MCF 10A (cell line): ENCODE measurements at regions of chr2 and their contacts with region 1.

Region 1: DNA sequence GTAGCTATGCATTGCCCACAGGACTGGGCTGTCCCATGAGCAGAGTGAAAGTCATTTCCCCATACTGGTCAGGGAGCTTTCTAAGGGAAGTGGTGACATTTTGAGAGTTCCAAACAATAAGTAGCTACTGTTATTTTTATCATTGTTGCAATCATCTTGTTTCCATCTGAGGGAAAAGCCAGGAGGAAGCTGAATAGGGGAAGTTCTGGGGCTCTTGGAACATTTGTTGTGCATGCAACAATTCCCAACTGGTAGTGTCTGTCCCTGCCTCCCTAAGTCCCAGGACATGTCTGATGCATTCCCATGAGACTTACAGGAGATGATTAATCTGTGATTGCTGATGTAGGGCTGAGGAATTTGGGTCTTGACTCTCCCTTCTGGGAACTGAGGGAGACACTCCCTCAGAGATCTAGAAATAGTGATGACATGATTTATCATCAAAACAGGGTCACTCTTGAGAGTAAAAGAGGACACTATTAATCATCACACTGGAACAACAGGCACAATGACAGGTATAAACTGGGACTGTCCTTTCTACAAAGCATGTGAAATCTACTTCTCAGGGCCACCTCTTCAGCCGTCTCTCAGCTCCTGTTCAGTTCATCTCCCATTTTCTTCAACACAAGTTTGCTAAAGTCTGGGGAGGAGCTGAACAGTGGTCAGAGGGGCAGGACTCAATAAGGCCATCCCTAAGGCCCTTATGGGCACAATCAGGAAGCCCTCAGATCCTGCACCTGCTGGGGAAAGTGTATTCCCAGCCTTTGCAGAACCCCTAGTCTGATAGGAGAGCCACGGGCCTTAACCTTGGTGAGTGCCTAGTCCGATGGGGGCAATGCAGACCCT is 28.0 kb upstream of the MARCO start:
- DNase-seq: peak; percentile 61
- H3K4me3 Mint-ChIP-seq: no peak overlapping the region
- H3K27ac Mint-ChIP-seq: peak overlapping the region; percentile 83
- H3K4me1 Mint-ChIP-seq: peaks cover 9% of the 10 kb centered on the region
- H3K27me3 Mint-ChIP-seq: no peaks in the 10 kb centered on the region
- CTCF ChIP-seq: no peak

Region 2: GRCh38 chr2:118312969-118313756 is 600.9 kb before region 1 on chr2:
- CTCF ChIA-PET with region 1: no interaction called
- POLR2A ChIA-PET with region 1: no interaction called
- intact Hi-C with region 1: no loop called
- DNase-seq: no peak
- H3K4me3 Mint-ChIP-seq: no peak overlapping the region
- H3K27ac Mint-ChIP-seq: no peak overlapping the region
- H3K4me1 Mint-ChIP-seq: no peaks in the 10 kb centered on the region
- H3K27me3 Mint-ChIP-seq: no peaks in the 10 kb centered on the region
- CTCF ChIP-seq: no peak

Region 3: DNA sequence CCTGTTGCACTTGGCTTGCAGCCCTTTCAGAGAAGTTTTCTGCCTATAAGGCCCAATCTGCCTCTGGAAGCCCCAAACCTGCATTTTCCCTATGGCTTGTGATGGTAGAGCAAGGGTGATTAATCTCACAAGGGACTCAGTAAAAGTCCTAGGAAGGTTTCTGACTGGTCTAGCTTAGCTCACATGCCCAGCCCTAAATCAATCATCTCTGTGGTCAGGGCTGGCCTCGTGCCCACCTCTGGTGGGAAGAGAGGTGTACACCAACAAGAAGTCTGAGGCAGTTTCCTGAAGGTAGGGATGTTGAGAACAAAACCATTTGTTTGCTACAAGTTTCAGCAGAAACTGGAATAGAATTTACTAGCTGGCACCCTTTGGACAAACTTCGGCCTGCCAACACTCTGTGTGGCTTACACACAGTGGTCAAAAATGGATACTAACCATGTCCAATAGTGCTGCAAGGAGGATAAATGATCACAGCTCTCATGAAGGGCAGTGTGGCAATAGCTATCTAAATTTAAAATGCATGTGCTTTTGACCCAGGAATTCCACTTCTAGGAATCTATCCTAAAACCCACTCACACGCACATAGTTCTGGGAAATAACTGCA is 163.0 kb before region 1 on chr2:
- CTCF ChIA-PET with region 1: no interaction called
- POLR2A ChIA-PET with region 1: no interaction called
- intact Hi-C with region 1: no loop called
- DNase-seq: peak; percentile 78
- H3K4me3 Mint-ChIP-seq: no peak overlapping the region
- H3K27ac Mint-ChIP-seq: no peak overlapping the region
- H3K4me1 Mint-ChIP-seq: peaks cover 8% of the 10 kb centered on the region
- H3K27me3 Mint-ChIP-seq: no peaks in the 10 kb centered on the region
- CTCF ChIP-seq: no peak

Region 4: DNA sequence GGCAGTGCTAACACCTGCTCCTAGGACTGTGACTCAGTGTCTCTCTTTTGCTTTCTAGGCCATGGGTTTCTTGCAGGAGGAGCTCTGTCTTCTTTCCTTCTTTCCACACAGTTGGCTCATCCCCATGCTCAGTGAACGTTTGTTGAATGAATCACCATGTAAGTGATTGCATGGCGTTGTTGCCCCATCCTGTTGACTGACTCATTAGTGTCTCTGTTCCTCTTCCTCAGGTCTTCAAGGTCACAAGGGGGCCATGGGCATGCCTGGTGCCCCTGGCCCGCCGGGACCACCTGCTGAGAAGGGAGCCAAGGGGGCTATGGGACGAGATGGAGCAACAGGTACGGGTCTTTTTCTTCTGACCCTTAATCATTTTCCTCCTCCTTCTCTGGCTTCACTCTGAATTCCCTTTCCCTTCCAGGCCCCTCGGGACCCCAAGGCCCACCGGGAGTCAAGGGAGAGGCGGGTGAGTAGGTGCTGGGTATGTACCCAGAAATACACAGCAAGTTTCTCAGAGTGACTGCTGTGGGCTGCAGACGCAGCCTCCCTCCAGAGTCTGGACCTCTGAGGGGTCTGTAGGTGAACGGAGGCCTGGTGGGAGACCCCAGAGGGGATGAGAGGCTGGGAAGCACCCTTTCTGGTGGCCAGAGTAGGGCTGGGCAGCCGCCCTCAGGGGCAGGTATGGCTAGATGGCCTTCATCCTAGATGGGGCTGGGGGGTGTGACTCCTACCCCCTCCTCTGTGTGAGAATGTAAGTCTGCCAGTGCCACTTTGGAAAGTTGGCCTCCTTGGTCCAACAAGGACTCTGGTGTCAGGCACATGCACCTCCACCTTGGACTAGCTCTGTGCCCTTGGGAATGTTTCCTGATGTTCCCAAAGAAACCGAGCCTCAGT is 60.3 kb after region 1 on chr2:
- CTCF ChIA-PET with region 1: interaction called, 3 read pairs
- POLR2A ChIA-PET with region 1: interaction called, 3 read pairs
- intact Hi-C with region 1: loop called (anchors 1 kb)
- DNase-seq: peak; percentile 98
- H3K4me3 Mint-ChIP-seq: peak overlapping the region; percentile 28
- H3K27ac Mint-ChIP-seq: peak overlapping the region; percentile 53
- H3K4me1 Mint-ChIP-seq: peaks cover 39% of the 10 kb centered on the region
- H3K27me3 Mint-ChIP-seq: no peaks in the 10 kb centered on the region
- CTCF ChIP-seq: no peak

Region 5: DNA sequence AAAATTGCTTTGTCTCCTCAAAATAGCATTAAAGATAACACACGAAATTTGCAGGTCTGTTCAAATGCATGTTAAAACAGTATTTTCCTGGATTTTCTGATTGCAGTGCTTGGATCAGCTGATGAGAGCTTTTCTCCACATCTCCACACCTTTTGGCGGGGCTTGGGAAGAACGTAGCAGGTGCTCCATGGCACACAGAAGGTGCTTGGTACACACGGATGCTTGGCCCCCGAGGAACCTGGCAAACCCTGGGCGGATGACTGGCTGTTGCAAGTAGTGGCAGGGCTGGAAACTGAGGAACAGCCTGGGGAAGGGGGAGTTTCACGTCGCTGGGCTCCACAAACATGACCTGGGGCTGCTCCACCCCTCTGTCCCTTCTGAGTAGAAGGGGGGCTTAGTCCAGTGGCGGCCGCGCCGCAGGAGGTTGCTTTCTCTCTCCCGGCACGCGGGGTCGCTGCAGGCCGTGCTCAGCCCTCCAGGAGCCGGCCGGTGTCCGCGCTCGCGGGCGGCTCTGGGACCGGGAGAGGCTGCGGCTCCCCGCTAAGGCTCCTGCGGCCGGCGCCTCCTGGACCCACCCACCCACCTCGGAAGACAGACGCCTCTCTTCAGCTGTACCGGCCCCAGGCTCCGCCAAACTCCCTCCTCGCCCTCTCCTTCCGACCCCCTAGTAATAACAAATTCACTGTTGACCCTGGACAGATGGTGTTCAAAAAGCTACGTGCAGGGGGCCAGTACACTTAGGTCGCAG is 97.3 kb after region 1 on chr2:
- CTCF ChIA-PET with region 1: interaction called, 3 read pairs
- POLR2A ChIA-PET with region 1: no interaction called
- intact Hi-C with region 1: loop called (anchors 10 kb)
- DNase-seq: no peak
- H3K4me3 Mint-ChIP-seq: no peak overlapping the region
- H3K27ac Mint-ChIP-seq: no peak overlapping the region
- H3K4me1 Mint-ChIP-seq: no peaks in the 10 kb centered on the region
- H3K27me3 Mint-ChIP-seq: peaks cover 37% of the 10 kb centered on the region
- CTCF ChIP-seq: peak; percentile 24

Region 6: GRCh38 chr2:119066272-119066804 is 152.3 kb after region 1 on chr2:
- CTCF ChIA-PET with region 1: no interaction called
- POLR2A ChIA-PET with region 1: no interaction called
- intact Hi-C with region 1: no loop called
- DNase-seq: peak; percentile 21
- H3K4me3 Mint-ChIP-seq: no peak overlapping the region
- H3K27ac Mint-ChIP-seq: no peak overlapping the region
- H3K4me1 Mint-ChIP-seq: peaks cover 6% of the 10 kb centered on the region
- H3K27me3 Mint-ChIP-seq: no peaks in the 10 kb centered on the region
- CTCF ChIP-seq: no peak